ENCODE measurements at regions of chr12 and their contacts with region 1.

Region 1: GRCh38 chr12:124774462-124775167 is 89.0 kb downstream of the SCARB1 start:
- DNase-seq: peak; percentile 77
- H3K4me3 Mint-ChIP-seq: peak overlapping the region; percentile 53
- H3K27ac Mint-ChIP-seq: peak overlapping the region; percentile 75
- H3K4me1 Mint-ChIP-seq: peaks cover 30% of the 10 kb centered on the region
- H3K27me3 Mint-ChIP-seq: peaks cover 19% of the 10 kb centered on the region

Region 2: DNA sequence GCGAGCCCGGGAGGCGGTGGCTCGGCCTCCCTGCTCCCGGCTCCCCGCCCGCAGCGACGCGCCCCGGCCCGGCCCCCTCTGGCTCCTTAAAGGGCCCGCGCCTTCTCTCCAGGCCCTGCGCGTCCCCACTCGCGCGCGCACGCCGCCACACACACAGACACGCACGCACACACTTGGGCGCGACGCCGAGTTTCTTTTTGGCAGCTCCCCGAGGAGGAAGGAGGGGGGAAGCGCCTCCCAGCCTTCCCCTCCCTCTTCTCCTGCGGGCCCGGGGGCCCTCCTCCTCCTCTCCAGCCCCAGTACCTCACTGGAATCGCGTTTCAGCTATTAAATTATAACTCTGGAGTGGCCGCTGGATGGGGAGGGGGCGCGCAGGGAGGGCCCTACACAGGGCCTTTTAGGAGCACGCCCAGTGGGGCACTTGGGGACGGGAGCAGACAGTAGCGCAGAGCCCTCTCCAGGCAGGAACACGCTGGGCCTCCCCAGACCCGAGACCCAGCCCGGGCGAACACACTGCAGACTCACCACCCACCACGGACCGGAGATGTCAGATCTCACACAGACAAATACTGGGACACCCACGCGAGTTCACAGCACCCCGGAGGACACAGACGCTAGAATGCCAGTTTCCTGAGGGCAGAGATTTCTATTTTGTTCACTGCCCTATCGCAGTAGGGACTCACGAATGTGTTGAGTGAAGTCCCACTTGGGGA is 206.8 kb before region 1 on chr12:
- intact Hi-C with region 1: loop called (anchors 1 kb)
- DNase-seq: peak; percentile 75
- H3K4me3 Mint-ChIP-seq: peak overlapping the region; percentile 78
- H3K27ac Mint-ChIP-seq: peak overlapping the region; percentile 78
- H3K4me1 Mint-ChIP-seq: peaks cover 10% of the 10 kb centered on the region
- H3K27me3 Mint-ChIP-seq: peaks cover 3% of the 10 kb centered on the region

Region 3: DNA sequence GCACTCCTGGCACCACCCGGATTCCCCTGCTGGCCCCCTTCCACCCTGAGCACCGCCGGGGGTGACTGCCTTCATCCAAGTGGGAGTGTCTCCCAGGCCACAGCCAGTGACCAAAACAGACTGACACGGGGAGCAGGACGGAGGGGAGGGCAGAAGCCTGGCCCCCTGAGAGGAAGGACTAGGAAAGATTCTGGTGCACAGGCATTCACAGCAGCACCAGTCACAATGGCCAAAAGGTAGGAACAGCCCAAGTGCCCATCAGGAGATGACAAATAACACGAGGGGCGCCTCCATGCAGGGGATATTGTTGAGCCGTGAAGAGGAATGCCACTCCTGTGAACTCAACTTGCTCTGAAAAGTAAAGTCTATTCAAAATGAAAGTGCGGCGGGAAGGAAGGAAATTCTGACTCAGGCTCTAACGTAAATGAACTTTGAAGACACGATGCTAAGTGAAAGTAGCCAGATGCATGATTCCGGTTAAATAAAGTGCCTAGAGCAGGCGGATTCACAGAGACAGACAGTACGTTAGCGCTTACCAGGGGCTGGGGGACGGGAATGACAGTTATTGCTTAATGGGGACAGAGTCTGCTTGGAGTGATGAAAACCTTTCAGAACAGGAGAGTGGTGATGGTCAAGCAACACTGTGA is 61.1 kb before region 1 on chr12:
- intact Hi-C with region 1: loop called (anchors 2 kb)
- DNase-seq: peak; percentile 58
- H3K4me3 Mint-ChIP-seq: peak overlapping the region; percentile 56
- H3K27ac Mint-ChIP-seq: peak overlapping the region; percentile 86
- H3K4me1 Mint-ChIP-seq: peaks cover 17% of the 10 kb centered on the region
- H3K27me3 Mint-ChIP-seq: peaks cover 1% of the 10 kb centered on the region

Region 4: DNA sequence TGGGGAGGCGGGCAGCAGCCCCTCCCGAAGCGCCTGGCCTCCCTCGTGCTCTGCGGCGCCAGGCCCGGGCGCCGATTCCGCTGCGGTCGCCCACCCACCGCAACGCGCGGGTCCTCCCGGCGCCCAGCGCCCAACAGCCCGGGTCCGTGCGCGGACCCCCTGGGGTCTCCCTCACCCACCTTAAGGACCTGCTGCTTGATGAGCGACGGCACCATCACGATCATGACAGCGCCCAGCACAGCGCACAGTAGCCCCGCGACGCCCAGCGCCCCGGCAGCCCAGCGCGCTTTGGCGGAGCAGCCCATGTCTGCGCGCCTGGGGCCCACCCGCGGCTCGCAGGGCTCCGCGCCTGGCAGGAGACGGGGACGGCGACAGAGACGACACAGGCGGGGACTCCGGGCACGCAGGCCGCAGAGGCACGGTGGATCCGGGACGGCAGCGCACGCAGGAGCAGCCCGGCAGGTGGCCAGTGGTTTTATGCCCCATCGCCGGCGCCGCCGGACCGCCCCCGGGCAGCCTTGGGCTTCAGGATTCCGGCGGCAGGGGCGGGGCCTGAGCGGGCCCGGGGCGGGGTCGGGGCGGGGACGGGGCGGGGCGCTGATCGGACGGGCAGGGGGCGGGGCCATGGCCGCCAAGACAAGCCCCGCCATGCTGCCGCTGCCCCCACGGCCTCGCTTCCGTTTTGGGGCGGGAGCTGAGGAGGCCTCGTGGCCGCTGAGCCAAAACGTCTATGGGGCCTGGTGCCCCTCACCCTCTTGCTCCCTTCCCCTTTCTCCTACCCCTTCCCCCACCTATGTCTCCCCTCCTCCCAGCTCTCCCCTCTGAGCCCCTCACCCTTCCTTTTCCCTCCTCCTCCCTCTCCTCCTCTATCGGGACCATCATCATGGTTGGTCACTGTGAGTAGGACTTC is 89.1 kb after region 1 on chr12 and contains the start of gene SCARB1:
- intact Hi-C with region 1: loop called (anchors 2 kb)
- DNase-seq: peak; percentile 69
- H3K4me3 Mint-ChIP-seq: peak within 1 kb of the TSS; percentile 81
- H3K27ac Mint-ChIP-seq: peak within 1 kb of the TSS; percentile 88
- H3K4me1 Mint-ChIP-seq: peaks cover 18% of the 10 kb centered on the region
- H3K27me3 Mint-ChIP-seq: peaks cover 3% of the 10 kb centered on the region
- total RNA-seq, gene SCARB1: 25.8 and 27.1 TPM in 2 replicates

Region 5: DNA sequence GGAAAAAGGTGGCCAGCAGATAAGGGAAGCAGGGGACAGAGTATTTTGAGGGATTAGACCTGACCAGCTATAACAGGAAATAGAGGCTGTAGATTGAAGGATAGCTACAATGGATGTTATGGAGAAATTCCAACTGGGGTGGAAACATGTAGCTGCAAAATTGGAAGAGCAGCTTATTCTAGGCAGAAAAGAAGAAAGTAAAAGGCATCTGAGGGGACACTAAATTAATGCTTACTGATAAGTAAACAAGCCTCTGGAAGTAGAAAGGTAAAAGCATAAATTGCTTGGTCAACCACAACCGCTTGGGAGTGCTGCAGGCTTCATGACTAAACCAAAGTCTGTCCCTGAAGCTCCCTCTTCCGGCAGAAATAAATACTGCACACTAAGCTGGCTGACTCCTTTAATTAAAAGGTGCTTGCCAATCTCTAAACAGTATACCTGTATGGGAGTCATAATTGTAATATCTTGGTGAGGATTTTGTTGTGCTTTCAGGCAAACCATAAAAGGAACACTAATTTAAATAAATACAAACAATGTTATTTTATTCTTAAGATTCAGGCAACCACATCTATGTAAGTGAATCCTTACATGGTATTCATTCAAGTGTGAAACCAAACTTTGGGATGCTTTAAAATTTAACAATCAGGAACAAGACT is 132.1 kb after region 1 on chr12:
- intact Hi-C with region 1: loop called (anchors 2 kb)
- DNase-seq: peak; percentile 83
- H3K4me3 Mint-ChIP-seq: no peak overlapping the region
- H3K27ac Mint-ChIP-seq: peak overlapping the region; percentile 58
- H3K4me1 Mint-ChIP-seq: peaks cover 24% of the 10 kb centered on the region
- H3K27me3 Mint-ChIP-seq: no peaks in the 10 kb centered on the region

Region 6: DNA sequence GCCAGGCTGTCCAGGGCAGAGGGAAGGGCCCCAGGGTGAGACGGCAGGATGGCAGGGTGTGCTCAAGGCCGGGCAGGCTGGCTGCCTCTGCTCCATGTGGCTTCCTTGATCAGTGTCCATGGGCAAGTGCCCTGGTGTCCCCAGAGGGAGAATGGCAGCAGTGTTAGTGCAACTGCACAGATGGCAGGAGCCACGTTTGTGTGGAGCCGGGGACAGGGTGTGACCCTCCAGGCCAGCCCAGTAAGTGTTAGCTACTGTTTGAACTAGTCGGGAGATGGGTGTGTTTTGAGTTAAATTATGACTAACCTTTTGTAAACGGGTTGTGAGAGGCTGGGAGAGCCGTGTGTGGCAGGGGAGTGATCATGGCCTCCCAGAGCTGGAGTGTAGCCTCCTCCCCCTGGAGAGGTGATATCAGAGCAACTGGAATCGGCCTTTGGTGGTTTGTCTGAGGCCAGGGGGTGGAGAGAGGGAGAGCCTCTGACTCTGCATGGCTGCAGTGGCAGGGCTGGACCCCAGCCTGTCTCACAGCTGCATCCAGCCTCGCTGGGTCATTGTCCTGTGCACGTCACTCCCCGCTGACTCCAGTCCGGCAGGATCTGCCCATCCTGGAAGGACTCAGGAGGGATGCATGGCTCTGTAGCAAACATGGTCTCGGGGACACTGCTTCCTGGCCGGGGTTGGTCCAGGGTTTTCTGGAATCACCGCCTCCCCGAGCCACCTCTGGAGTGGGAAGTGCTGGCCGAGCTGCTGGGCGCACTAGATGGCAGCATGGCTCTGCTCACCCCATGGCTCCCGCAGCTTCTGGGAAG is 318.5 kb after region 1 on chr12:
- intact Hi-C with region 1: no loop called
- DNase-seq: no peak
- H3K4me3 Mint-ChIP-seq: no peak overlapping the region
- H3K27ac Mint-ChIP-seq: no peak overlapping the region
- H3K4me1 Mint-ChIP-seq: peaks cover 3% of the 10 kb centered on the region
- H3K27me3 Mint-ChIP-seq: no peaks in the 10 kb centered on the region